ENCODE measurements at regions of chr2 and their contacts with region 1.

Region 1: GRCh38 chr2:174487108-174487819 is 435 bp upstream of the GPR155 start:
- DNase-seq: peak; percentile 100
- ATAC-seq: peak; percentile 89
- H3K4me3 Mint-ChIP-seq: peak overlapping the region; percentile 95
- H3K27ac Mint-ChIP-seq: peak overlapping the region; percentile 91
- H3K4me1 Mint-ChIP-seq: peaks cover 69% of the 10 kb centered on the region
- H3K27me3 Mint-ChIP-seq: no peaks in the 10 kb centered on the region

Region 2: DNA sequence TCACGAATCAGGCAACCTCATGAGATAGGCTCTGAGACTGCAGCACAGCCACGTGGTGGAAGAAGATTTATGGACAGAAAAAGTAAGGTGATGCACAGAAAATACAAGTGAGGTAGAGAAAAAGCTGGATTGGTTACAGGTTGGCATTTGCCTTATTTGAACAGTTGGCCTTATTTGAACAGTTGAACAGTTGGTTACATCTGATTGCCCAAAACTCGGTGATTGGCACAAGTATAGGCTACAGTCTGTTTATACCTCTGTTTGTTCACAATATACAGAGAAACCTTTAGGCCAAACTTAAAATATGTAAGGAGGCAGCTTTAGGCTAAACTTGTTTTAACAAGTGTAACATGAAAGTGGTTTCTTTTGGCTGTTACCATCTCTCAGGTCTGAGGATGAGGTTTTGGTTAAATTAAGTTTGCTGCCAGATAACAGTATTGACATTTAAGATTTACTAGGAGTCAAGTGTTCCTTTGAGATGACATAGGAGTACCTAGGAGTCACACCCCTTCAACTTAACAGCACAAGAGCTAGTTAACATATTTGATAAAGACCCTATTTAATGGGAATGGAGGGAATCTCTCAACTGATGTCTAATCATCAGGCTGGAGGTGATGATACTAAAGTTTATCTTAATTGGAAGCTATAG is 16.0 kb after region 1 on chr2:
- CTCF ChIA-PET with region 1: interaction called, 21 read pairs
- POLR2A ChIA-PET with region 1: interaction called, 4 read pairs
- DNase-seq: no peak
- ATAC-seq: no peak
- H3K4me3 Mint-ChIP-seq: no peak overlapping the region
- H3K27ac Mint-ChIP-seq: no peak overlapping the region
- H3K4me1 Mint-ChIP-seq: peaks cover 16% of the 10 kb centered on the region
- H3K27me3 Mint-ChIP-seq: no peaks in the 10 kb centered on the region

Region 3: GRCh38 chr2:174522553-174522952 is 35.3 kb after region 1 on chr2:
- CTCF ChIA-PET with region 1: interaction called, 36 read pairs
- POLR2A ChIA-PET with region 1: interaction called, 6 read pairs
- DNase-seq: no peak
- ATAC-seq: no peak
- H3K4me3 Mint-ChIP-seq: no peak overlapping the region
- H3K27ac Mint-ChIP-seq: no peak overlapping the region
- H3K4me1 Mint-ChIP-seq: peaks cover 18% of the 10 kb centered on the region
- H3K27me3 Mint-ChIP-seq: peaks cover 8% of the 10 kb centered on the region

Region 4: DNA sequence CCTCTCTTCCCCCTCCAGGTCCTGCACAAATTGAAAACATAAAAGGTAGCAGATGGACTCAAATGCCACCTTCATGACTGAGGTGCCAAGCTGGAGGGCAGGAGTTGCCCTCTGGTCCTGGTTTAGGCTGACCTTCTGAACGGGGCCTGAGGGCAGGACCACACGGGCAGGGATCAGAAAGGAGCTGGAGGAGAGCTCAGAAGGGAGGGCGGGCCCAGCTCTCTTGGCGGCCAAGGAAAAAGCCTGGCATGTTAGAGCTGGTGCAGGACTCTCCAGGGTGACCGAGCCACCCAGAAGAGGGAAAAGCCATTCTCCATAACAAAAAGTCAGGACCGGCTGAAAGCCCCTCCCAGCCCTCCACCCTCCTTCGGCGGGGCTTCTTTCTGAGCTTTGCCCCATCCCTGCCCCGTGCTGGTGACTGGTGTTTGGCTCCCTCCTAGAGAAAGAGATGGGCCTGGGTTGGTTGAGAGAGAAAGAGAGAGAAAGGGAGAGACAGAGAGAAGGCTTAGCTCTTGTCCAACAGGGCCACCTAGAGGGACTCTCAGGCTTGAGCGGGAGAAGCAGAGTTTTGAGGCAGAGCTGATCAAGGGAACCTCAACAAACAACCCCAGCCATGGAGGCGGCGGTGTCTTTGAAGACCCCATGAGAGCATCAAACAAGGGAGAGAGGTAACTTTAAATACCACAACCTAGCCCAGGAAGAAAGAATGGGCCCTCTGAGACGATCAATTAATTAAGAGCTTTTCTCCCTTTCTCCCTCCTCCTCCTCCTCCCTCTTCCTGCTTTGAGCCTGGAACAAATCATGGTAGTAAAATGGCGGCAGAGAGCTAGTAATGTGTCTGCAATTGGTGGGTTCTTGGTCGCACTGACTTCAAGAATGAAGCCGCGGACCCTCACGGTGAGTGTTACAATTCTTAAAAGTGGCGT is 59.6 kb after region 1 on chr2:
- CTCF ChIA-PET with region 1: interaction called, 26 read pairs
- POLR2A ChIA-PET with region 1: interaction called, 16 read pairs
- DNase-seq: peak; percentile 66
- ATAC-seq: peak; percentile 87
- H3K4me3 Mint-ChIP-seq: no peak overlapping the region
- H3K27ac Mint-ChIP-seq: peak overlapping the region; percentile 32
- H3K4me1 Mint-ChIP-seq: peaks cover 13% of the 10 kb centered on the region
- H3K27me3 Mint-ChIP-seq: peaks cover 3% of the 10 kb centered on the region

Measured in activated CD8-positive, alpha-beta T cell treated with anti-CD3 and anti-CD28 coated beads, Interleukin-2, amount 10 ng/mL, durations not matched to agents 7 days and 5 days (primary cell).